A549 (cell line): ENCODE measurements at regions of chr15 and their contacts with region 1.

Region 1: GRCh38 chr15:73964736-73965093 is 27.4 kb downstream of the STOML1 start:
- DNase-seq: peak; percentile 66 to 82
- ATAC-seq: peak; percentile 93 to 99
- H3K4me3 ChIP-seq: no peak overlapping the region
- H3K27ac ChIP-seq: no peak overlapping the region
- H3K4me1 ChIP-seq: 0 out of 3 replicates have a peak, but pooled peaks cover 3% of the 10 kb centered on the region
- CTCF ChIP-seq: peak; percentile 66
- EP300 ChIP-seq: no peak
- POLR2A ChIP-seq: no peak
- RAD21 ChIP-seq: peak; percentile 36 to 37; a peak in 3 of 5 replicates

Region 2: DNA sequence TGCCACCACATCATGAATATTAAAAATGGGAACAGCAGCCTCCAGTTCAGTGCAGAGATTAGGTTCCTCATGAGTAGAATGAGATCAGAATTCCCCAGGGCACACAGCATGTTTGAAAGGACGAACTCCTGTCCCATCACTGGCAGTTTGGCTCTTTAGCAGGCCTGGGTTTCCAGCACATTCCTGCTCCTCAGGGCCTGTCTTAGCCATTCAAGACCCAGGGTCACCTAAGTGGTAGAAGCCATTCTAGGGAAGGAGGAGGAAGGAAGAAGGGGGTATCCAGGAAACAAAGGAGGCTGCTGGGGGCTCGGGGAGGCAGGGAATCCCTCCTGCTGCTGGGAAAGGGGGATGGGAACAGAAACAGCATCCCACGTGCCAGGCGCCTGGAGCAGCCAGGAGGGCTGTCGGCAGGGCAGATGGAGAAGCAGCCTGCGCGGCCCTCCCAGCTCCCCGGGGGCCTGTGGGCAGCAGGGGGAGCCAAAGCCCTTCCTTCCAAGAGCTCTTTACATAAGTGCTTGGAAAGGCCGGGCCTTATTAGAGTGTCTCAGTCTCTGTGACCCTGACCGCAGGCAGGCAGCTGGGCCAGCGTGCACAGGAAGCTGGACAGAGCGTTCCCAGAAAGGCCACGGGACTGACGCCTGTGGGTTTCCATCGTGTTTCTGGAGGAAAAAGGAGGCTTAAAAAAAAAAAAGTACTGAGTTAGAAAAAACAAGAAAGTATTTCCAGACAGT is 13.7 kb before region 1 on chr15:
- CTCF ChIA-PET with region 1: interaction called, 64 read pairs
- POLR2A ChIA-PET with region 1: no interaction called
- DNase-seq: peak; percentile 80
- ATAC-seq: peak; percentile 94 to 99
- H3K4me3 ChIP-seq: no peak overlapping the region
- H3K27ac ChIP-seq: peak overlapping the region in 1 of 2 experiments; percentile 73; a peak in 3 of 6 replicates
- H3K4me1 ChIP-seq: no peaks in the 10 kb centered on the region
- CTCF ChIP-seq: peak; percentile 58
- EP300 ChIP-seq: no peak
- POLR2A ChIP-seq: no peak
- RAD21 ChIP-seq: peak; percentile 64 to 71